SK-N-SH (cell line): ENCODE measurements at regions of chr19 and their contacts with region 1.

Region 1: DNA sequence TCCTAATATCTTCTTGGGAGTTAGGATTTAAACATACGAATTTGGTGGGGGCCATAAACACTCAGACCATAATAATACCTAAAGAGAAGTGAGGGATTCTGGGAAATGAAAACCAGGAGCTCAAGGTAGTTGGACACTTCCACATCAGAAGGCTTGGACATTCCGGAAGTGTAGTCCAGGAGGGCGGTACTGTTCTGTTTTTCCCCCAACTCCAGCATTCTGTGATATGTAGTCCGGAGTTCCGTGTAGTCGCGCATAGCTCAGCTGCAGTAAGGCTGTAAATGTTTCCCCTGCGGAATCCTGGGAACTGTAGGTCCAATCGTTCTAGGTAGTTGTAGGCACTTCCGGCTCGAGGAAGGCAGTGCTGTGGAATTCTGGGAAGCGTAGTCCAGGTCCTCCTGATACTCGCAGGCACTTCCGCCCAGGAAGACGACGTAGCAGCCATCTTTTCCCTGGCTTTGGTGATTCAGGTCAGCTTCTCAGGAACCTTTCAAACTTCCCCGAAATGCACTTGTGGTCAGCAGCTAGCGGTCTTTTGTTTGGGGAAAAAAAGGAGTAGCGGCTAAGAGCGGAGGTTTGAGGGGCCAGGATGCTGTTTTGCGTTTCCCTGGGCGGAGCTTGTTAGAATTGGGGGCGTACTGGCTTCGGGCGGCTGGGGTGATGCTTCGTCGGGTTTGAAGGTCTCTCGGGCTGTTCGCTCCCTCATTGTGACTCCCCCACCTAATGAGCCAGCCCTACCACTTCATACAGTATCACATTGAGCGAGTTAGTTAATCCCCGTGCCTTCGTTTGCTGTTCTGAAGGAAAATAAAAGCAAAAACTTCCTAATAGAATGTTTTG is at the start of gene ZNF226:
- DNase-seq: peak; percentile 78
- H3K4me3 ChIP-seq: peak within 1 kb of the TSS; percentile 73 to 98
- H3K27ac ChIP-seq: peak within 1 kb of the TSS; percentile 85 to 88
- H3K4me1 ChIP-seq: peaks cover 0 to 7% of the 10 kb centered on the region in 2 experiments; a peak in 2 of 4 replicates
- H3K27me3 ChIP-seq: no peaks in the 10 kb centered on the region
- CTCF ChIP-seq: no peak
- EP300 ChIP-seq: no peak; a peak in 1 of 4 replicates
- RAD21 ChIP-seq: no peak; the same call in 1 of the 2 replicates
- polyA plus RNA-seq, gene ZNF226: 28.8 and 48.3 TPM in 2 replicates

Region 2: GRCh38 chr19:44113138-44113783 is 51.6 kb before region 1 on chr19 and contains the start of gene ZNF225:
- CTCF ChIA-PET with region 1: interaction called, 3 read pairs
- POLR2A ChIA-PET with region 1: interaction called, 12 read pairs
- DNase-seq: peak; percentile 88
- H3K4me3 ChIP-seq: peak within 1 kb of the TSS; percentile 80 to 96
- H3K27ac ChIP-seq: peak within 1 kb of the TSS; percentile 50 to 90; a peak in 3 of 4 replicates
- H3K4me1 ChIP-seq: peaks cover 0 to 7% of the 10 kb centered on the region in 2 experiments; a peak in 1 of 4 replicates
- H3K27me3 ChIP-seq: no peaks in the 10 kb centered on the region
- CTCF ChIP-seq: no peak
- EP300 ChIP-seq: no peak
- RAD21 ChIP-seq: no peak
- polyA plus RNA-seq, gene ZNF225: 1.2 and 1.3 TPM in 2 replicates

Region 3: DNA sequence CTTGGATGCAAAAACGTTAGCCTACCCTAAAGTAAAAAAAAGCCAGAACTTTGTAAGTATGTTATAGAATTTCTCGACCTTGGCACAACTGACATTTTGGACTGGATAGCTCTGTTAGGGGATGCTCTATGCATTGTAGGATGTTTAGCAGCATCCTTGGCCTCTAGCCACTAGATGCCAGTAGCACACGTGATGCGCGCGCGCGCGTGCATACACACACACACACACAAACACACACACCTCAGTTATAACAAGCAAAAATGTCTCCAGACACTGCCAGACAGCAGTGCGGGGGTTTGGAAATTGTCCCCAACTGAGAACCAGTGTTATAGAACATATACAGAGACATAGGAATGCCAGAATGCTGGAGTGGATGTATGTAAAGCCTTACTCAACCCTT is 17.3 kb after region 1 on chr19:
- CTCF ChIA-PET with region 1: no interaction called
- POLR2A ChIA-PET with region 1: no interaction called
- DNase-seq: no peak
- H3K4me3 ChIP-seq: no peak overlapping the region
- H3K27ac ChIP-seq: no peak overlapping the region
- H3K4me1 ChIP-seq: no peaks in the 10 kb centered on the region
- H3K27me3 ChIP-seq: no peaks in the 10 kb centered on the region
- CTCF ChIP-seq: no peak
- EP300 ChIP-seq: no peak
- RAD21 ChIP-seq: no peak

Region 4: DNA sequence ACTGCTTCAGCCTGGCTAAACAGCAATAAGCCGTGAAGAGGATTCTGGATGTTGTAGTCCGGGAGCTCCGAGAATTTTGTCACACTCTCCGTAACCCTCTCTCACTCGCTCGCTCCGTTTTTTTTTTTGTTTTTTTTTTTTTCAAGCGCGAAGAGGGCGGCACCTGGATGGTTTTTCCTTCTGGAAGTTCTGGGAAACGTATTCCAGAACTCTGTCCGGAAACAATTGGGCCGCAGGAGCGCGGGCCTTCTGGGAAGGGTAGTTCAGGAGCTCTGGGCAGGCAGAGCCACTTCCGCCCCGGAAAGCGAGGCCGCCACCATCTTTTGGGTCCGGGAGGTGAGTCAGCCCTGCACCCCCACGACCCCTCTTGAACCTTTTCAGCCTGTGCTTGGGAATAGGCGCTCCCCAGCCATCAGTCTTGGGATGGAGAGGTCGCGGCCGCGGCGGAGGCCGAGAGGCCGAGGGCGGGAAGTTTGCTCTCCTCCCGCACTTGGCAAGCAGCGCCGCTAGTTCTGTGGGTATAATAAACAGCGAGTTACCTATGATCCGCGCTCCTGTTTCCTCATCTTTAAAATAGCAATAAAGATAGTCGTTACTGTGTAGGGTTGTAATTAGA is 47.5 kb after region 1 on chr19 and contains the start of gene ZNF227:
- CTCF ChIA-PET with region 1: no interaction called
- POLR2A ChIA-PET with region 1: interaction called, 15 read pairs
- DNase-seq: peak; percentile 87
- H3K4me3 ChIP-seq: peak within 1 kb of the TSS; percentile 69 to 89
- H3K27ac ChIP-seq: peak within 1 kb of the TSS; percentile 63 to 91
- H3K4me1 ChIP-seq: peaks cover 0 to 4% of the 10 kb centered on the region in 2 experiments; a peak in 3 of 4 replicates
- H3K27me3 ChIP-seq: no peaks in the 10 kb centered on the region
- CTCF ChIP-seq: no peak
- EP300 ChIP-seq: no peak; a peak in 1 of 4 replicates
- RAD21 ChIP-seq: no peak
- polyA plus RNA-seq, gene ZNF227: 8.3 and 9.1 TPM in 2 replicates